ENCODE measurements at regions of chr15 and their contacts with region 1.

Region 1: DNA sequence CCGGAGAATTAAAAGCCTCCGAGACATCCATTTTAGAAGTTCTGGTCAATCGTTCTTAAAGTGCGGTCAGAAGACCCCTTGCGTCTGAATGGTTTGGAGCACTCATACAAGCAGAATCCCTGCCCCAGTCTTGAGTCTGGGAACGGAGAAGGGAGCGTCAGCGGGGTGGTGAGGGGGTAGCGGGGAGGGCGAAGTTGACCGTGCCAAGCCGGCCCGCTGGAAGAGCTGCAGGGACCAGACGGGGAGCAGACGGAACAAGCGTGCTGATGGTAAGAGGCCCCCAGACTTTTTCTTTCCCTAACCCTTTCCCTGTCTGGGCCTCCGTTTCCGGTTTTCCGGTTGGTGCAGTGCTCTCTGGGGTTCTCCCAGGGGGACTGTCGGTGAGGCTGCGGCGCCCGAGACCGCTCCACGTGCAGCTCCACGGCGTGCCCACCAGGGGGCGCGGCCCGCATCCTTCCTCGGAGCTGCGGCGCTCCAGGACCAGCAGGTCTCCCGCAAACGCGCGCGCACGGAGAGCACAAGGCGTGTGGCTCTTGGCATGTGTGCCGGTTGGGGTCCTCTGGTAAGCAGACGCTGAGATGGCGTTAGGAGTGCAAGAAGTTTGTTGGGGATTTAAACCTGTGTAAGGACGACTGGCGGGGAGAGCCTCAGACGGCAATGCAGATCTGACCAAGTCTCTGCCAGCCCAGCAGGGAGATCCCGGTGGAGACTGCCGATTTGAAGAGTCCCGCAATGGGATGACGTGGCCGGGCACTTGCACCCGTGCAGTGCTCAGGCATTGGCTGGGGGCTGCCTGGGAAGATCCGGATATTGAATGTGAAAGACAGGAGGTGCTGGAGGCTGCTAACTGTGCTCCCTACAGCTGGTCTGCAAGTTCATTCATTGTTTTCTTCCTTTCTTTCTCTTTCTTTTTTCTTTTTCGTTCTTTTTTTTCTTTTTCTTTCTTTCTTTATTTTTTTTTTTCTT is 19.2 kb upstream of the CORO2B start:
- DNase-seq: peak; percentile 76
- H3K4me3 Mint-ChIP-seq: peak overlapping the region; percentile 68
- H3K27ac Mint-ChIP-seq: no peak overlapping the region
- H3K4me1 Mint-ChIP-seq: peaks cover 15% of the 10 kb centered on the region
- H3K27me3 Mint-ChIP-seq: peaks cover 32% of the 10 kb centered on the region

Region 2: GRCh38 chr15:68244235-68244634 is 315.4 kb before region 1 on chr15:
- CTCF ChIA-PET with region 1: no interaction called
- intact Hi-C with region 1: no loop called
- DNase-seq: no peak
- H3K4me3 Mint-ChIP-seq: no peak overlapping the region
- H3K27ac Mint-ChIP-seq: no peak overlapping the region
- H3K4me1 Mint-ChIP-seq: no peaks in the 10 kb centered on the region
- H3K27me3 Mint-ChIP-seq: peaks cover under 1% of the 10 kb centered on the region

Region 3: GRCh38 chr15:68464448-68465090 is 95.1 kb before region 1 on chr15:
- CTCF ChIA-PET with region 1: no interaction called
- intact Hi-C with region 1: no loop called
- DNase-seq: no peak
- H3K4me3 Mint-ChIP-seq: no peak overlapping the region
- H3K27ac Mint-ChIP-seq: no peak overlapping the region
- H3K4me1 Mint-ChIP-seq: no peaks in the 10 kb centered on the region
- H3K27me3 Mint-ChIP-seq: peaks cover 8% of the 10 kb centered on the region

Region 4: GRCh38 chr15:68580026-68580882 is 20.6 kb after region 1 on chr15:
- CTCF ChIA-PET with region 1: interaction called, 12 read pairs
- intact Hi-C with region 1: no loop called
- DNase-seq: no peak
- H3K4me3 Mint-ChIP-seq: no peak overlapping the region
- H3K27ac Mint-ChIP-seq: no peak overlapping the region
- H3K4me1 Mint-ChIP-seq: peaks cover 9% of the 10 kb centered on the region
- H3K27me3 Mint-ChIP-seq: peaks cover 38% of the 10 kb centered on the region

Region 5: DNA sequence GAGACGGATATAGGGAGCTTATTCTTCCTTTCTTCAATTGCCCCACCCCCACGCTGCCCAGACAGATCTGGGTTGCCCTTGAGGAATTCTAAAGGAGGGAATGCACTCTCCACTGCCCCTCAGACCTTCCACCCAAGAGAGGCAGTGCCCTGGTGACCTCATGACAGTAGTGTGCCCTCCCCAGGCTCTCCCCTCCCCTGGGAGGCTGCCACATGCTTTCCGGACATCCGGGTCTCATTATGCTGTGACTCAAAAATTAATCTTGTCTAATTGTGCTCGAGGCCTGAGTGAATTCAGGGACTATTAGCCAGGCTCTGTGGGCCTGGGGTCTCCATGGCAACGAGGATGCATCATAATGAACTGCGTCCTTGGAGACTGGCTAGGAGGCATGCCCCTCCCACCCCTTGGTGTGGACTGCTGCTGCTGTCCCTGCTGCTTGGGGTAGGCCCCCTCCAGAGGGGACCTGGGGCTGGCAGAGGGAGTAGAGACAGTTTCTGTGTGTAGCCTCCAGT is 40.0 kb after region 1 on chr15:
- CTCF ChIA-PET with region 1: no interaction called
- intact Hi-C with region 1: no loop called
- DNase-seq: no peak
- H3K4me3 Mint-ChIP-seq: no peak overlapping the region
- H3K27ac Mint-ChIP-seq: no peak overlapping the region
- H3K4me1 Mint-ChIP-seq: no peaks in the 10 kb centered on the region
- H3K27me3 Mint-ChIP-seq: peaks cover 5% of the 10 kb centered on the region

Region 6: DNA sequence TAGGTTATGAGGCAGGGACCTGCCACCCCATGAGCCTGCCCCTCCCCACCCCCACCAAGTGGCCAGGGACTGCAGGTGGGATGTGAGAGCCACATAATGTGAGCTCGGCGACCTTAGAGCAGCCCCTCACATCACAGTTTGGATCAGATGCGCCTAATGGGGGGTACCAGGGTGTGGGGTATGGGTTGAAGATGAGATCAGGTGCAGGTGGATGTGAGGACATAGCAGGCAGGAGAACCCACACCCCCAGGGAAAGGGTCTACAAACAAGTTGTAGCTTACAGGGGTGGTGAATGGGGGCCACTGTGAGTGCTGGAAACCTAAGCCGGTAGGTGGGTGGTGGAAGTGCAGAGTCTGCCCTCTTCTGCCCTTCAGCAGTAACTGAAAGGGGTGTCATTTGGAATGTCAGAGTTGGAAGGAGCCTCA is 113.2 kb after region 1 on chr15:
- CTCF ChIA-PET with region 1: interaction called, 184 read pairs
- intact Hi-C with region 1: loop called (anchors 1 kb)
- DNase-seq: no peak
- H3K4me3 Mint-ChIP-seq: no peak overlapping the region
- H3K27ac Mint-ChIP-seq: no peak overlapping the region
- H3K4me1 Mint-ChIP-seq: peaks cover 3% of the 10 kb centered on the region
- H3K27me3 Mint-ChIP-seq: peaks cover 11% of the 10 kb centered on the region

Measured in activated naive CD4-positive, alpha-beta T cell treated with anti-CD3 and anti-CD28 coated beads for 36 hours (primary cell).